ENCODE measurements at regions of chr1 and their contacts with region 1.

Region 1: GRCh38 chr1:178501705-178502329 is 5.1 kb upstream of the CLEC20A start:
- DNase-seq: peak; percentile 71
- ATAC-seq: peak; percentile 88
- H3K4me3 ChIP-seq: no peak overlapping the region
- H3K27ac ChIP-seq: no peak overlapping the region
- H3K4me1 ChIP-seq: no peaks in the 10 kb centered on the region
- H3K27me3 ChIP-seq: no peaks in the 10 kb centered on the region
- CTCF ChIP-seq: peak; percentile 80

Region 2: GRCh38 chr1:178180405-178180804 is 321.4 kb before region 1 on chr1:
- CTCF ChIA-PET with region 1: interaction called, 11 read pairs
- POLR2A ChIA-PET with region 1: no interaction called
- intact Hi-C with region 1: no loop called
- DNase-seq: no peak
- ATAC-seq: no peak
- H3K4me3 ChIP-seq: no peak overlapping the region
- H3K27ac ChIP-seq: no peak overlapping the region
- H3K4me1 ChIP-seq: no peaks in the 10 kb centered on the region
- H3K27me3 ChIP-seq: no peaks in the 10 kb centered on the region
- CTCF ChIP-seq: no peak

Region 3: DNA sequence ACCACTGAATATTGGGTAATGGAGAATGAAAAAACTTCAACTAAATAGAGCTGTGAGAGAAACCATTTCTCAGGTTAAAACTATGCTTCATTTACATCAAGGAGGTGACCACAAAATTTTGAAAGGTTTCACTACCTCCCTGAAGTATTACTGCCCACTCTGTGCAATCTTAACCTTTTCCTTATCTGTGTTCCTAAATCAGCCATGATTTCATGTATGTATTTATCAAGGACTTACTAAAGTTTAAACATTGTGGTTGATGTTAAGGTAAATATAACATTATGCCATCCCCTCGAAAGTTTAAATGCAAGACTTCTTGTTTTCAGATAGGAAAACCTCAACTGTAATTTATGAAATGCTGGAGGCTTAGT is 89.4 kb before region 1 on chr1:
- CTCF ChIA-PET with region 1: no interaction called
- POLR2A ChIA-PET with region 1: no interaction called
- intact Hi-C with region 1: no loop called
- DNase-seq: peak; percentile 1
- ATAC-seq: no peak
- H3K4me3 ChIP-seq: no peak overlapping the region
- H3K27ac ChIP-seq: no peak overlapping the region
- H3K4me1 ChIP-seq: peaks cover 2% of the 10 kb centered on the region
- H3K27me3 ChIP-seq: no peaks in the 10 kb centered on the region
- CTCF ChIP-seq: no peak